B cell (primary cell): ENCODE measurements at regions of chr3 and their contacts with region 1.

Region 1: GRCh38 chr3:57675530-57675929 is 17.3 kb downstream of the DENND6A start:
- DNase-seq: no peak
- ATAC-seq: no peak
- H3K4me3 ChIP-seq: no peak overlapping the region
- H3K4me3 Mint-ChIP-seq: peak overlapping the region; percentile 38
- H3K27ac ChIP-seq: peak overlapping the region in 1 of 2 donors; percentile 44
- H3K27ac Mint-ChIP-seq: peak overlapping the region; percentile 88
- H3K4me1 ChIP-seq: peaks cover 31 to 35% of the 10 kb centered on the region in 2 donors
- H3K4me1 Mint-ChIP-seq: peaks cover 56% of the 10 kb centered on the region
- H3K27me3 ChIP-seq: no peaks in the 10 kb centered on the region
- H3K27me3 Mint-ChIP-seq: no peaks in the 10 kb centered on the region
- CTCF ChIP-seq: no peak

Region 2: GRCh38 chr3:57755668-57756527 is 80.4 kb after region 1 on chr3 and contains the start of gene SLMAP:
- CTCF ChIA-PET with region 1: interaction called, 4 read pairs
- POLR2A ChIA-PET with region 1: interaction called, 9 read pairs
- intact Hi-C with region 1: loop called (anchors 1 kb)
- DNase-seq: peak; percentile 96
- ATAC-seq: peak; percentile 93
- H3K4me3 ChIP-seq: peak within 1 kb of the TSS; percentile 77 to 99 (median 95)
- H3K4me3 Mint-ChIP-seq: peak within 1 kb of the TSS; percentile 99
- H3K27ac ChIP-seq: peak within 1 kb of the TSS; percentile 56 to 93
- H3K27ac Mint-ChIP-seq: peak within 1 kb of the TSS; percentile 93
- H3K4me1 ChIP-seq: peaks cover 23 to 26% of the 10 kb centered on the region in 2 donors
- H3K4me1 Mint-ChIP-seq: peaks cover 30% of the 10 kb centered on the region
- H3K27me3 ChIP-seq: no peaks in the 10 kb centered on the region
- H3K27me3 Mint-ChIP-seq: no peaks in the 10 kb centered on the region
- CTCF ChIP-seq: no peak
- total RNA-seq, gene SLMAP: 67.2 and 70.8 TPM in 2 replicates

Region 3: DNA sequence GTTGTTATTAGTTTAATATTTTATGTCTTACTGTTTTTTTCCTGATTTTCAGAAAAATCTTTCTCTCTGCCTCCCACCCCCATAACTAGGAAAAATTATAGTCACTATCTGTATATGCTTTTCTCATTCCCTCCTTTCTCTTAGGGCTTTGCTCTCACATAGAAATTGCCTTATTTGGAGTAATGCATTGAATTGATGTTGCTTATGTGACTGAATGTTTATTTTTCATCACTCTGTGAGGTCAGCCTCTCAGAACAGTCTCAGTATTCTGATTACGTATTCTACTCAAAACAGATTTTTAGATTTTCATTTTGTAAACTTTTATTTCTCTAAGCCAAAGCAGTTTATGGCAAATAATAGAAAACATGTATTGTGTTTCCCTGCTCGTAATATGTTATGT is 201.6 kb after region 1 on chr3:
- CTCF ChIA-PET with region 1: no interaction called
- POLR2A ChIA-PET with region 1: no interaction called
- intact Hi-C with region 1: no loop called
- DNase-seq: no peak
- ATAC-seq: no peak
- H3K4me3 ChIP-seq: no peak overlapping the region
- H3K4me3 Mint-ChIP-seq: no peak overlapping the region
- H3K27ac ChIP-seq: no peak overlapping the region
- H3K27ac Mint-ChIP-seq: no peak overlapping the region
- H3K4me1 ChIP-seq: no peaks in the 10 kb centered on the region
- H3K4me1 Mint-ChIP-seq: no peaks in the 10 kb centered on the region
- H3K27me3 ChIP-seq: no peaks in the 10 kb centered on the region
- H3K27me3 Mint-ChIP-seq: no peaks in the 10 kb centered on the region
- CTCF ChIP-seq: no peak

Region 4: GRCh38 chr3:57983734-57984518 is 308.4 kb after region 1 on chr3:
- CTCF ChIA-PET with region 1: no interaction called
- POLR2A ChIA-PET with region 1: no interaction called
- intact Hi-C with region 1: loop called (anchors 5 kb)
- DNase-seq: peak; percentile 77
- ATAC-seq: peak; percentile 98
- H3K4me3 ChIP-seq: no peak overlapping the region
- H3K4me3 Mint-ChIP-seq: no peak overlapping the region
- H3K27ac ChIP-seq: peak overlapping the region in 1 of 2 donors; percentile 3
- H3K27ac Mint-ChIP-seq: peak overlapping the region; percentile 37
- H3K4me1 ChIP-seq: peaks cover 27 to 31% of the 10 kb centered on the region in 2 donors
- H3K4me1 Mint-ChIP-seq: peaks cover 30% of the 10 kb centered on the region
- H3K27me3 ChIP-seq: peaks cover 0 to 8% (median 3%) of the 10 kb centered on the region in 4 experiments
- H3K27me3 Mint-ChIP-seq: peaks cover 3% of the 10 kb centered on the region
- CTCF ChIP-seq: no peak